Mucosa of descending colon (tissue), 3 donors: ENCODE measurements at regions of chr1 and their contacts with region 1.

Region 1: DNA sequence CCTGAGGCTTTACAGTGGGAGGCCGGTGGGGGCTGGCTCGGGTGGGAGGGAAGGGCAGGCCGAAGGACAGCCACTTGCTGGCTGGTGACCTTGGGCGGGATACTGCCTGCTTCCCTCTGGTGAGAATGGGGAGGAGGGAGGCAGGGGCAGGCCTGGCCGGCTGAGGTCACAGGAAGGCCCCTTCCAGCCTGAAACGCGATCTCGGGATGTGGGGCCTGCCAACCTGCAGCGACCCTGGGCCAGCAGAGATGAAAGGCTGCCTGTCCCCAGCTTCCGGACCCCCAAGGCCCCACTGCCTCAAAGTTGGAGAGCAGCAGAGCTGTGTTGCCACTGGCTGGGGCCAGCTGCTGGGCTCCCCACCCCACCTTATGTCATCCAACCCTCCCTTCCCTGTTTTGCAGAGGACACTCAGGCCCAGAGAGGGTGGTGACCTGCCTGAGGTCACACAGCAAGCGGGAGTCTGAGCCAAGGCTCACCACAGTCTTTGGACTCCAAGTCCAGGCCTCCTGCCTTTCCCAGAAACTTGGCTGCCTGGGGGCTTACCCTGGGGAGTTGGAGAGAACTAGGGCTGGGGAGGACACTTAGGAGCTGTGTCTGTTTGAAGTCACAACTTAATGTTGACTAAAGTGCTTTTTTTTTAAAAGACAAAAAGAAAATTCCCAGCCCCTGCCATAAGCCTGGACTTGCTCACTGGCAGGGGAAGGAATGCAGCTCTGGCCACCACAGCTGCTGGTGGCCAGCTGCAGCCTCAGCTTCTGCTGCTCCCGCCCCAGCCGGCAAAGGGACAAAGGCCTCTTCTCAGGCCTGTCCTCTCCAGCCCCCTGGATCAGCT is 14.8 kb upstream of the WASF2 start:
- DNase-seq: peak in 2 of 3 donors; percentile 52 to 73
- ATAC-seq: peak; percentile 57
- H3K4me3 ChIP-seq: no peak overlapping the region
- H3K4me1 ChIP-seq: peaks cover 30% of the 10 kb centered on the region
- CTCF ChIP-seq: no peak

Region 2: GRCh38 chr1:27341525-27342252 is 163.1 kb before region 1 on chr1 and contains the start of gene SYTL1:
- intact Hi-C with region 1: no loop called
- DNase-seq: peak; percentile 69 to 85 (median 75)
- ATAC-seq: peak; percentile 87
- H3K4me3 ChIP-seq: peak within 1 kb of the TSS; percentile 9
- H3K4me1 ChIP-seq: peaks cover 7% of the 10 kb centered on the region
- CTCF ChIP-seq: no peak
- total RNA-seq, gene SYTL1: 4.2 to 9.7 (median 8.7) TPM

Region 3: DNA sequence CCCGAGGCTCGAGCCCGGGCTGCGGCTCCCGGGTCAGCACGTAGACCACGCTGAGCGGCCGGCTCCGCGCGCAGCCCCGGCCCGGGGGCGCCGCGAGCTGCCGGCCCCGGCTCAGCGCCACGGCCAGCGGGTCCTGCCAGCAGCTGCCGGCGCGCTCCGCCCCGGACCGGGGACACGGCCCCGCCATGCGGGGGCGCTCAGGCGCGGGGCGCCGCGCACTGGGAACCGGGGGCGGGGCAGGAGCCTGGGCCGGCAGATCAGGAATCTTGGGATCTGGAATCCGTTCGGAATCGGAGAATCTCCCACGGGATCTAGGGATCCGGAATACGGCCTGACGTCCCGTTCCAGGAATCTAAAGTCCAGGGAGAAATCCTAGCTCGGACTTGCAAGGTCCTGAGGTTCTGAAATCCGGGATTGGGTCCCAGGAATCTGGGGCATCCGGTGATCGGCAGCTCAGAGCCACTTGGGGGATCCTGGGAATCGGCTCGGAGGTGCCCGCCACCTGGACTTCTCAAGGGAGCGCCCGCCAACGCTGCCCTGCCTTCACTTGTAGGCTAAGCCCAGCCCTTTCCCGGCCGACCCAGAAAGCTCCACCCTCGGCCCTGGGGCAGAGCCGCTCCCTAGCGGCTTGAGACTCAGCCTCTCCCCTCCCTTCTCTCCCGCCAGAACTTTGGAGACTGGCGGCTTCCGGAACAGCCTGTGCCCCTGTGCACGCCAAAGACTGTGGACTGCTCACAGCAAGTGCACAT is 138.2 kb before region 1 on chr1 and contains the start of gene MAP3K6:
- intact Hi-C with region 1: no loop called
- DNase-seq: peak; percentile 89 to 93 (median 90)
- ATAC-seq: peak; percentile 82
- H3K4me3 ChIP-seq: peak within 1 kb of the TSS; percentile 22
- H3K4me1 ChIP-seq: peaks cover 7% of the 10 kb centered on the region
- CTCF ChIP-seq: peak; percentile 46
- total RNA-seq, gene MAP3K6: 18.5 to 38.5 (median 28.5) TPM

Region 4: DNA sequence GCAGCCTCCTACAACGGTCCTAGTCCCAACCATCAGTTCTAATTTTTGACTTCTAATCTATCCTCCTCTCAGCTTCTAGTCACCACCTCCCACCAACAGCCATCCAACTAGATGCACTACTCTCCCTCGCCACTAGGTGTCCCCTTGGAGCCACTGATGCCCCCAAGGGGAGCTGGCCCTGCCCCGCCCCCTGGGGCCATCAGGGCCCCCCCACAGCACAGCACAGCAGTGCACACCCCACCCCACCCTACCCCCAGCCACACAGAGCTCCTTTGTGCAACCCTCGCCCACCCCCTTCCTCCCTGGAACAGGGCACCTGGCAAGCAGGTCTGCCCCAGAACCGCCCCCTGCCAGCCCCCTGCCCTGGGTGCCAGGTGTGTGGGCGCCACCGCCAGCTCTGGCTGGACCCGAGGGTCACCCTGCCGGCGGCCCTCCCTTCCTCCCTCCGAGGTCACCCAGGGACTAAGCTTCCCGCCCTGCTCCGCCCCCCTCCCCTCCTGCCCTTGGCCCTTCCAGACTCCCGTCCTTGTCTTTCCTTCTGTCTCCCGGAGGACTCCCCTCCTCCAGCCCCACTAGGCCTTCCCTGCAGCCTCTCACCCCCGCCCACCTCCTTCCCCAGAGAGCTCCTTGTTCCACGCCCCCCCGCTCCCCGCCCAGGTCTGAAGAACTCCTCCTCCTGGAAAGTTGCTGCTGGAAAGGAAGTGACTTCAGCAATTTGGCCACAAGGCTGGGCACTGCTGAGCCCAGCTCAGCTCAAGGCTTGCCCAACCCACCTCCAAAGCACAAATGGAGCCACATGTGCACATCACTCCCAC is 52.2 kb after region 1 on chr1:
- intact Hi-C with region 1: loop called in 1 of 2 experiments (anchors 10 kb)
- DNase-seq: peak; percentile 92 to 95 (median 93)
- ATAC-seq: peak; percentile 76
- H3K4me3 ChIP-seq: no peak overlapping the region
- H3K4me1 ChIP-seq: peaks cover 25% of the 10 kb centered on the region
- CTCF ChIP-seq: peak; percentile 96